Activated naive CD4-positive, alpha-beta T cell treated with anti-CD3 and anti-CD28 coated beads for 36 hours (primary cell): ENCODE measurements at regions of chr18 and their contacts with region 1.

Region 1: GRCh38 chr18:3281456-3282400 is 19.8 kb downstream of the MYL12B start:
- DNase-seq: no peak
- H3K4me3 Mint-ChIP-seq: no peak overlapping the region
- H3K27ac Mint-ChIP-seq: no peak overlapping the region
- H3K4me1 Mint-ChIP-seq: peaks cover 6% of the 10 kb centered on the region
- H3K27me3 Mint-ChIP-seq: no peaks in the 10 kb centered on the region

Region 2: GRCh38 chr18:3297025-3297984 is 15.6 kb after region 1 on chr18:
- CTCF ChIA-PET with region 1: interaction called, 34 read pairs
- intact Hi-C with region 1: no loop called
- DNase-seq: peak; percentile 98
- H3K4me3 Mint-ChIP-seq: peak overlapping the region; percentile 93
- H3K27ac Mint-ChIP-seq: peak overlapping the region; percentile 79
- H3K4me1 Mint-ChIP-seq: peaks cover 3% of the 10 kb centered on the region
- H3K27me3 Mint-ChIP-seq: peaks cover 11% of the 10 kb centered on the region

Region 3: DNA sequence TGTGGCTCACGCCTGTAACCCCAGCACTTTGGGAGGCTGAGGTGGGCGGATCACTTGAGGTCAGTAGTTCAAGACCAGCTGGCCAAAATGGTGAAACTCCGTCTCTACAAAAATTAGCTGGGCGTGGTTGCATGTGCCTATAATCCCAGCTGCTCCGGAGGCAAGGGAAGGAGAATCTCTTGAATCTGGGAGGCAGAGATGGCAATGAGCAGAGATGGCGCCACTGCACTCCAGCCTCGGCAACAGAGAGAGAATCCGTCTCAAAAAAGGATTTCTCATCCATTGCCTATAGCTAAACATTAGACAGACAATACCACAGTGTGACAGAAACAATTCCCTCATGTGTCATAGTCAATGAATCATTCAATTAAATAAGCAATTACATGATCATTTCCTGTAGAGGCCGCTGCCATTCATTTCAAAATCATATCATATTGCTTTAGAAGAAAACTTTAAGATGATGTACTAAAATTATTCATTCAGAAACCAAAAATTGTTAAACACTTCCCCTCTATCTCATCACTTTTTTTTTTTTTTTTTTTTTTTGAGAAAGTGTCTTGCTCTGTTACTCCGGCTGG is 98.7 kb after region 1 on chr18:
- CTCF ChIA-PET with region 1: no interaction called
- intact Hi-C with region 1: loop called (anchors 5 kb)
- DNase-seq: peak; percentile 37
- H3K4me3 Mint-ChIP-seq: no peak overlapping the region
- H3K27ac Mint-ChIP-seq: no peak overlapping the region
- H3K4me1 Mint-ChIP-seq: peaks cover 7% of the 10 kb centered on the region
- H3K27me3 Mint-ChIP-seq: no peaks in the 10 kb centered on the region

Region 4: DNA sequence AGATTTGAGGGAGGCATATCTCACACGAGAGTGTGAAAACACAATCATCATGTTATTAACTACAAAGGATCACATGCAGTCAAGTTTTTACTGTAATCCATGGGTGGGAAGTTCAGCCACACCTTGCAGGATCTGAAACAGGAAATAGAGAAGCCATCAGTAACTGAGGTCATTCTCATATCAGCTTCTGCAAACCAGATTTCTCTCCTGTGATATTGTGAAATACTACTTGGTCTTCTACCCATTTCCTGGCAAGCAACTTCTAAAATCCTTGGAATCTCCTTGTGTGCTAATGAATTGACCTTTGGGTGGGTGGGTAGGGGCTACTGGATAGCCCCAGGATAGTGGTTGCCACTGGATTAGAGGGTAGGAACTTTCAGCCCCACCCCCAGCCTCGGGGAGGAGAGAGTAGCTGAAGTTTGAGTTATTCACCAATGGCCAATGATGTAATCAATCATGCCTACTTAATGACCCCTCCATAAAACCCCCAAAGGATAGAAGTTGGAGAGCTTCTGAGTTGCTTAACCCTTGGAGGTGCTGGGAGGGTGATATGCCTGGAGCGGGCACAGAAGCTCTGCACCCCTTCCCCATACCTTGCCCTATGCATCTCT is 142.7 kb after region 1 on chr18:
- CTCF ChIA-PET with region 1: no interaction called
- intact Hi-C with region 1: no loop called
- DNase-seq: no peak
- H3K4me3 Mint-ChIP-seq: no peak overlapping the region
- H3K27ac Mint-ChIP-seq: no peak overlapping the region
- H3K4me1 Mint-ChIP-seq: no peaks in the 10 kb centered on the region
- H3K27me3 Mint-ChIP-seq: no peaks in the 10 kb centered on the region

Region 5: GRCh38 chr18:3585656-3586509 is 304.2 kb after region 1 on chr18:
- CTCF ChIA-PET with region 1: interaction called, 16 read pairs
- intact Hi-C with region 1: loop called (anchors 1 kb)
- DNase-seq: peak; percentile 88
- H3K4me3 Mint-ChIP-seq: no peak overlapping the region
- H3K27ac Mint-ChIP-seq: peak overlapping the region; percentile 1
- H3K4me1 Mint-ChIP-seq: peaks cover 36% of the 10 kb centered on the region
- H3K27me3 Mint-ChIP-seq: no peaks in the 10 kb centered on the region

Region 6: DNA sequence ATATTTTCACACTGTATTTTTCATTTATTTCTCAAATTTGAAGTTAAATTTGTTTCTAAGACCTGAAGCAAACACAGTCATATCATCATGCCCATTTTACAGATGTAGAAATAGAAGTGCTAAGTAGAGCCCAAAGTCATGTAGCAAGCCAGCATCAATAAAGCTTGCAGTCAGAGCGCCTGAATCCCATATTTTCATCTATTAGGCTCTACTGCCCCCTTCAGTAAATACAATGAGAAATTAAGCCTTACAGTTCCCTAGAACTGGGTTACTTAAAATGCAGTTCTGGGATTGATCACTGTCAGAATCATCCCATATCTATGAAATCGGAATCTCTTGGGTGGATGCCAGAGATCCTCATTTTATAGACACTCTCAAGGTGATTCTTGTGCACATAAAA is 588.1 kb after region 1 on chr18:
- CTCF ChIA-PET with region 1: no interaction called
- intact Hi-C with region 1: loop called (anchors 1 kb)
- DNase-seq: no peak
- H3K4me3 Mint-ChIP-seq: no peak overlapping the region
- H3K27ac Mint-ChIP-seq: no peak overlapping the region
- H3K4me1 Mint-ChIP-seq: no peaks in the 10 kb centered on the region
- H3K27me3 Mint-ChIP-seq: peaks cover 16% of the 10 kb centered on the region

Region 7: GRCh38 chr18:4068552-4069158 is 786.9 kb after region 1 on chr18:
- CTCF ChIA-PET with region 1: no interaction called
- intact Hi-C with region 1: loop called (anchors 5 kb)
- DNase-seq: peak; percentile 53
- H3K4me3 Mint-ChIP-seq: no peak overlapping the region
- H3K27ac Mint-ChIP-seq: no peak overlapping the region
- H3K4me1 Mint-ChIP-seq: no peaks in the 10 kb centered on the region
- H3K27me3 Mint-ChIP-seq: peaks cover 9% of the 10 kb centered on the region